ENCODE measurements at regions of chr6 and their contacts with region 1.

Region 1: GRCh38 chr6:16761471-16762267 is 409 bp upstream of the ATXN1 start:
- DNase-seq: peak; percentile 89
- H3K4me3 Mint-ChIP-seq: peak overlapping the region; percentile 83
- H3K27ac Mint-ChIP-seq: peak overlapping the region; percentile 96
- H3K4me1 Mint-ChIP-seq: peaks cover 58% of the 10 kb centered on the region
- H3K27me3 Mint-ChIP-seq: no peaks in the 10 kb centered on the region

Region 2: GRCh38 chr6:16128759-16129622 is 632.7 kb before region 1 on chr6 and contains the start of gene MYLIP:
- CTCF ChIA-PET with region 1: no interaction called
- POLR2A ChIA-PET with region 1: interaction called, 22 read pairs
- DNase-seq: peak; percentile 97
- H3K4me3 Mint-ChIP-seq: peak within 1 kb of the TSS; percentile 95
- H3K27ac Mint-ChIP-seq: peak within 1 kb of the TSS; percentile 88
- H3K4me1 Mint-ChIP-seq: peaks cover 41% of the 10 kb centered on the region
- H3K27me3 Mint-ChIP-seq: peaks cover 20% of the 10 kb centered on the region
- total RNA-seq, gene MYLIP: 16.2 to 18.6 TPM

Region 3: DNA sequence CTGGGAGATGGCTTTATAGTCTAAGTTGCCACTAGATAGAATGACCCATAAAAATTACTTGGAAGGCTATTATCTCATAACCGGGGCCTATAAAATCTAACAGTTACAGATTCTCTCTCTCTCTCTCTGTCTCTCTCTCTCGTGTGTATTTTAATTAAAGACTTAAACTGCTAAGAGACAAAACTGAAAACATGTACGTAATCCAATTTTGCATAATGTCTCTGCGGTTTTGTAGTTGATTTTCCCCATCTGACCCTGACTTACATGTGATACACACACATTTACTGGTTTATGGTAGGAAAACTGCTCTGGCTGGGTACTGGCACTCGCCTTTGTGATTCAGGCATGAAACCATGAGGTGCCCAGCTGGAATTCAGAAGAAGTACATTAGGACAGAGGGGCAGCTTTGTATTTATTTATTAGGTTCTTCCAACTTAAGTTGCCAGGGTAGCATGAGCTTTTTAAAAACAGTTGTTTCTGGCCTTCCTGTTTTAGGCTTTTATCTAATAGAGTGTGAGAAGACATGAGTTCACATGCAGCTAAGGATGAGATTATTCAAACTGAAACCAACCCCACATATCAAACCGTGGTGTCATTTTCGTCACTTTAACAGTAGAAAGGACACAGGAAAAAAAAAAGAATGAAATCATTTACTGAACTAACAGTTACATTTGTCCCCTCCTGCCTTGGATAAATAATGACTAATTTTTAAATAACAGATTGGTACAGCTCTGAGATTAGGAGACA is 340.8 kb before region 1 on chr6:
- CTCF ChIA-PET with region 1: interaction called, 33 read pairs
- POLR2A ChIA-PET with region 1: interaction called, 34 read pairs
- DNase-seq: peak; percentile 49
- H3K4me3 Mint-ChIP-seq: peak overlapping the region; percentile 29
- H3K27ac Mint-ChIP-seq: peak overlapping the region; percentile 99
- H3K4me1 Mint-ChIP-seq: peaks cover 55% of the 10 kb centered on the region
- H3K27me3 Mint-ChIP-seq: no peaks in the 10 kb centered on the region

Region 4: GRCh38 chr6:16651871-16652270 is 109.8 kb before region 1 on chr6:
- CTCF ChIA-PET with region 1: interaction called, 25 read pairs
- POLR2A ChIA-PET with region 1: interaction called, 46 read pairs
- DNase-seq: peak; percentile 29
- H3K4me3 Mint-ChIP-seq: peak overlapping the region; percentile 52
- H3K27ac Mint-ChIP-seq: peak overlapping the region; percentile 88
- H3K4me1 Mint-ChIP-seq: peaks cover 65% of the 10 kb centered on the region
- H3K27me3 Mint-ChIP-seq: no peaks in the 10 kb centered on the region

Region 5: DNA sequence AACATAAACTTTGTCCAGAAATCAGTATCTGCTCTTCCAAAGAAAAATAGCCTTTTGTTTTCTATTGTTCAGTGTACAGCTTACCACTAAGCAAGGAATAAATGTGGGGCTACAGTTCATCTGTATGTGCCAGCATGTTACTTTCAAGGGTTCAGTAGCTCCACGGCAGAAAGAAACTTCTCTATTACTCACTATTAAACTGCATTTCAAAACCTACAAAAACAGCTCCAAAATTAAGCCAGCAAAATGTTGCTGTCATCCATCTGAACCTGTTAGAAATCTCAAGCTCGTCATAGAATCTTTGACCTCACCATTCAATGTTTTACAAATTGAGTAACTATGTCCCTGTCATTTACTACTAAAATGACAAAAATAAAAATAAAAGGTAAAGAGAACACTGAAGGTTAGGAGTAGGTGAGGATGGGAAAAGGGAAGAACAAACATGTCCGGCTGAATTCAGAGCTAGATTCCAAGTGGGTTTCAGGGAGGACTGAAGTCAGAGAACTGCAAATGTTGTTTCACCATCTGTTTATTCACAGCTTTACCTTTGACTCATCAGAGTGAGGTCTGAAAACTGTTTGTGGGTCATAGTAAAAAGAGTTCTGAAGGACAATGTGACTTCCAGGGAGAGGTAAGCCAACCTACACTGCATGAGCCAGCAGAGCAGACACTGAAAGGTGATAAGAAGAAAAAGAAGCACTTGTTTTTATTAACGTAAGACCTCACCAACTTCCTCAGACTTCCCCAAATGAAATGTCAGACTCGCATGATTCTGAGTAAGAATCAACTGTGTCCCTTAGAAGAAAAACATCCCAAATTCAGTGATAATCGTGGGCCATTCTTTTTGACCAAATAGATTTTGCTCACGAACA is 62.4 kb before region 1 on chr6:
- CTCF ChIA-PET with region 1: interaction called, 46 read pairs
- POLR2A ChIA-PET with region 1: interaction called, 74 read pairs
- DNase-seq: no peak
- H3K4me3 Mint-ChIP-seq: peak overlapping the region; percentile 78
- H3K27ac Mint-ChIP-seq: peak overlapping the region; percentile 96
- H3K4me1 Mint-ChIP-seq: peaks cover 83% of the 10 kb centered on the region
- H3K27me3 Mint-ChIP-seq: no peaks in the 10 kb centered on the region

Region 6: GRCh38 chr6:16741112-16742016 is 20.3 kb before region 1 on chr6:
- CTCF ChIA-PET with region 1: interaction called, 6 read pairs
- POLR2A ChIA-PET with region 1: interaction called, 20 read pairs
- DNase-seq: no peak
- H3K4me3 Mint-ChIP-seq: no peak overlapping the region
- H3K27ac Mint-ChIP-seq: peak overlapping the region; percentile 4
- H3K4me1 Mint-ChIP-seq: peaks cover 74% of the 10 kb centered on the region
- H3K27me3 Mint-ChIP-seq: no peaks in the 10 kb centered on the region

Region 7: DNA sequence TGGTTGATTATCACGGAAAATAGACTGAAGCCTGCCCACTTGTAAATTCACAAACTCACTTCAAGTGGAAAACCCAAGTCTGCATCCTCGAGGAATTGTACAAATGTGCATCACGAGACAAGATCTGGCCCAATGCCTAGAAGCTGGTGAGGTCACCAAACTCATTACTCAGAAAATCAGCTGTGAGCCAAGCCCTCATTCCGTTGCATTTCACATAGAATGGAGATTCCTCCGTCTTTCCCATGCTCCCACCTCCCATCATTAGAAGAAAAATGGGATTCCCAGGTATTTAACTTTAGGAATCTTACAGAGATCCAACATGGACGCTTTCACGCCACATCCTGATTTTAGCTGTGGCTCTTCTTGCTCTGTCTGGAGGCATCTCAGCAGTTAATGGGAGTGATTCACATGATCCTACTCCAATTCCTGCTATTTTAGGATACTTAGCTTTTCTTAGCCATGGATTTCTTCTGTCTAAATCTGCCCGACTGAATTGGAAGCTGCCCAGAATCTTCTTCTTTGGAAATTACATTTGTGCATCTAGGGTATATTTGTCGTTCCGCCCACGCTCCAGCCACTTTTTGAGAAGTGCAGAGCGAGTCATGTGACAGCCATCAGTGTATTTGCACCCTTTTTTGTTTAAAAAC is 271.4 kb after region 1 on chr6:
- CTCF ChIA-PET with region 1: no interaction called
- POLR2A ChIA-PET with region 1: no interaction called
- DNase-seq: no peak
- H3K4me3 Mint-ChIP-seq: no peak overlapping the region
- H3K27ac Mint-ChIP-seq: no peak overlapping the region
- H3K4me1 Mint-ChIP-seq: no peaks in the 10 kb centered on the region
- H3K27me3 Mint-ChIP-seq: peaks cover 5% of the 10 kb centered on the region

Measured in activated CD4-positive, alpha-beta memory T cell treated with anti-CD3 and anti-CD28 coated beads, Interleukin-2, amount 10 ng/mL, durations not matched to agents 7 days and 5 days (primary cell).